Cardiac septum (tissue), 1 donor: ENCODE measurements at regions of chr11 and their contacts with region 1.

Region 1: GRCh38 chr11:16881074-16881709 is 133.0 kb downstream of the PLEKHA7 start:
- DNase-seq: no peak

Region 2: GRCh38 chr11:16820324-16821092 is 60.7 kb before region 1 on chr11:
- intact Hi-C with region 1: loop called (anchors 2 kb)
- DNase-seq: peak; percentile 88

Region 3: DNA sequence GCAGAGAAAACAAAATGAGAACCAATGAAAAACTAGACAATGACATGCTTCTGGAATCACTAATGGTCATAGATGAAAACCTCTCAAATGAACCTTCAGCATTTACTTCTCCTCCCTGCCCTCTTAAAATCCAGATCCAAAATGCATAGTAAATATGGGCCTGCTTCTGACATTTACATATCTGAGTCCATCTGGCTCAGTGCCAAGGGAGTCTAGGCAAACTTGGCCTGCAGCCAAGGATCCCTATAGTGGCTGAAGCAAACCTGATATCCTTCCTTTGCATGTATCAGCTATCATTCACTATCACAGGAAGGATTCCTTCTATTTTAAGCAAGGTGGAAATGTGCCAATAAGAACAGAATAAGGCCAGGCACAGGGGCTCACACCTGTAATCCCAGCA is 37.9 kb before region 1 on chr11:
- intact Hi-C with region 1: no loop called
- DNase-seq: no peak

Region 4: GRCh38 chr11:16857186-16857585 is 24.0 kb before region 1 on chr11:
- intact Hi-C with region 1: loop called (anchors 1 kb)
- DNase-seq: peak; percentile 84

Region 5: DNA sequence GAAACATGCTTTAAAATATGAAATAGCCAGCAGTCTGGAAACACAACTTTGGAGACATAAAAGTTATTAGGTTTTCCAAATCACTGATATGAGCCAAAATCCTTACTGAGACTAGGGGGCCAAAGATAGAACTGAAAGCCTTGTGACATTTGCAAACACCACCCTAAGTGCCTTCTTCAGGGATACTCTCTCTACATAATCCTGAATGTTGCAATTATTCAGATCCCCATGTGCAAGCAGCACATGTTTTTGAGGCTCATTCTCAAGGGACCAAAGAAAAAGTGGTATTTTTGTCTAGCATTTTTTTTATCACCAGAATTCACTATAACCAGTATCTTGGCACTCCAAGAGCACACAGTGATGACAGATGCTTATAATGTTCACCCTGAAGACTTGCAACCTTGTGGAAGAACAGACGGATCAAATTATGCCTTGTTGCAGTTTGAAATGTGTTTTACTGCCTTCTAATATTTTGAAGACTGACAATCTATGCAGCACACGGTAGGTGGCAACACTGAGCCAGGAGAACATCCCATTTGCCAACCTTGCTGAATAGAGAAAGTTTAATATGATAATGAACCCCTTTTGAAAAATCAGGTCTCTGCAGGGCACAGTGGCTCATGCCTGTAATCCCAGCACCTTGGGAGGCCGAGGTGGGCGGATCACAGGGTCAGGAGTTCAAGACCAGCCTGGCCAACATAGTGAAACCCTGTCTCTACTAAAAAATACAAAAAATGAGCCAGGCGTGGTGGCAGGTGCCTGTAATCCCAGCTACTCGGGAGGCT is 54.5 kb after region 1 on chr11:
- intact Hi-C with region 1: loop called (anchors 10 kb)
- DNase-seq: no peak

Region 6: GRCh38 chr11:16945671-16946469 is 64.7 kb after region 1 on chr11:
- intact Hi-C with region 1: no loop called
- DNase-seq: no peak